Heart left ventricle (tissue), 16 donors: ENCODE measurements at regions of chr17 and their contacts with region 1.

Region 1: DNA sequence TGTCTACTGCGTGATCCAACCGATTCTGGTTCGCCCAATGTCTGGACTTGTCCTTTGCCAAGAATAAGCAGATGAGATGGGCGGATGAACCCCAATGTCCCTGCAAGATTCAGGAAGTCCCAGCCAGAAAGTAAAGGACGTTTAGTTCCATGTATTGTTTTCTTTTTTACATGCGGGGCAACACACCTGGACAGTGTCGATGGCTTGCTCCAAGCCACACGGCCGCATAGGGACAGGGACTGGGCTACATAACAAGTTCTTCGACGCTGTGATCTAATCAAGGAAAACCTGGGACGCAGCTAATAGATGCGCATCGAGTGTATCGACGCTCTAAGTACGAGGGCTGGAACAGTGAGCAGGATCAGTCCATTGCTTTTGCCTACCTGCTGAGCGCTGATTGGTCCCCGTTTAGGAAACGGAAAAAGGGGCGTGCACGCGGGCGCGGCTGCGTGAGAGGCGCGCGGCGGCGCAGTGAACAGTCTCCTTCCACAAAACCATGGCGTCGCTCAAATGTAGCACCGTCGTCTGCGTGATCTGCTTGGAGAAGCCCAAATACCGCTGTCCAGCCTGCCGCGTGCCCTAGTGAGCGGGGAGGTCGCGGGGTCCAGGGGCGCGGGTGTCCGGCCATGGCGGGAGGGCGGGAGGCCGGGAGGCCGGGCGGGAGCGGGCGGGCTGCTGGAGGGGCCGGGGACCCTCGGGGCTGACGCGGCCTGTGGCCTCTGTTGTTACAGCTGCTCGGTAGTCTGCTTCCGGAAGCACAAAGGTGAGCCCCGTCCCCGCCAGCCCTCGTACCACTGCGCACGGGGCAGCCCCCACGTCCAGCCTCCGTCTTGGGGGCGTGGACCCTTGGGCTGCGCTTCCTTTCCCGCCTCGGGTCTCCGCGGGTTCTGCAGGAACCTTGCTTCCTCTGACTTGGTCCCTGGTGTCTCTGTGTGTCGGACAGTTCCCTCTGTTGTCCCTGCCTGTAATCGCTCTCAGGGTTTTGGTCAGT is at the start of gene ZNHIT3:
- DNase-seq: peak; percentile 92 to 95 (median 93)
- ATAC-seq: peak; percentile 91 to 98 (median 97)
- H3K4me3 ChIP-seq: peak within 1 kb of the TSS; percentile 74 to 99 (median 96)
- H3K27ac ChIP-seq: peak within 1 kb of the TSS; percentile 63 to 88 (median 80)
- H3K4me1 ChIP-seq: peaks cover 2 to 40% (median 29%) of the 10 kb centered on the region in 12 donors
- H3K27me3 ChIP-seq: peaks cover 0 to 14% (median 0%) of the 10 kb centered on the region in 9 donors
- CTCF ChIP-seq: no peak
- POLR2A ChIP-seq: peak in 1 of 2 donors; percentile 64
- total RNA-seq, gene ZNHIT3: 14.8 to 28.5 (median 23.1) TPM

Region 2: GRCh38 chr17:35969558-35970380 is 516.7 kb before region 1 on chr17:
- intact Hi-C with region 1: loop called in 9 of 10 experiments (anchors 1 to 10 kb)
- DNase-seq: peak in 4 of 5 donors; percentile 63 to 78 (median 69)
- ATAC-seq: peak; percentile 67 to 81 (median 75)
- H3K4me3 ChIP-seq: no peak overlapping the region
- H3K27ac ChIP-seq: no peak overlapping the region
- H3K4me1 ChIP-seq: peaks cover 0 to 22% (median 11%) of the 10 kb centered on the region in 12 donors
- H3K27me3 ChIP-seq: no peaks in the 10 kb centered on the region
- CTCF ChIP-seq: peak; percentile 72 to 94 (median 84)
- POLR2A ChIP-seq: no peak

Region 3: DNA sequence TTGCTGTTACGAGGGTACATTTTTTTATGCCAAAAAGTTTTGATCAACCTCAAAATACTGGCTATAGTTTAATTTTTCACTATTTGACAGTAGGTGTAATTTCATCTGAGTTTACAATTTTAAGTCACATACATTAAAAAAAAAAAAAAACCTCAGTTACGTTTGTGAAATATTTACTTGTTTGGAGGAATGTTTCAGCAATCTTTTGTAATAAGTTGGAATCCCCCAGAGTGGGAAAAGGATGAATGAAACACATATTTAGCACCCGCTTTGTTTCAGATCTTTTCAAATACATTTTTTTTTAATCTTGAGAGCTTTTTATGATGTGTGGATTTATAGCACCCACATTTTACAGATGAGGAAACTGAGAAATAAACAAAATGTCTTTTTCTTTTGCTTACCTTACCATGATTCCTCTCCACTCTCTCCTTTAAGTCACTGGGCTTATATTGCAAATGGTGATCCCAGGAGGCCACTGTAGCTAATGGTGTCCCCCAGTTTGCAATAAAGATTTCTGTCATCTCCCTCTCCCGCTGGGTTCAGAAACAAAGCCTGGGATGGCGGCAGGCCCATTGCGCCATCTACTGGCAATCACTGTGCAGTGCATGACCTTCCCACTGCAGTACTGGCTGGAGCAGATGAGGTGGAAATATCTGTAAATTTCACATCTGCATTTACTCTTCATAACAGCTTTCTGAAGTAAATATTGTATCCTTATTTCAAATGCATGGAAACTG is 337.8 kb before region 1 on chr17:
- intact Hi-C with region 1: loop called in 2 of 10 experiments (anchors 5 to 10 kb)
- DNase-seq: peak; percentile 47 to 84 (median 71)
- ATAC-seq: peak; percentile 56 to 94 (median 90)
- H3K4me3 ChIP-seq: no peak overlapping the region
- H3K27ac ChIP-seq: peak overlapping the region in 1 of 12 donors; percentile 7
- H3K4me1 ChIP-seq: peaks cover 0 to 9% (median 0%) of the 10 kb centered on the region in 12 donors
- H3K27me3 ChIP-seq: peaks cover 0 to 16% (median 0%) of the 10 kb centered on the region in 9 donors
- CTCF ChIP-seq: peak; percentile 91 to 100 (median 98)
- POLR2A ChIP-seq: no peak

Region 4: GRCh38 chr17:36534840-36535668 is 48.6 kb after region 1 on chr17 and contains the starts of genes MYO19 and PIGW:
- intact Hi-C with region 1: loop called in 6 of 10 experiments (anchors 5 to 10 kb)
- DNase-seq: peak; percentile 87 to 94 (median 92)
- ATAC-seq: peak; percentile 85 to 95 (median 92)
- H3K4me3 ChIP-seq: peak within 1 kb of the TSS; percentile 38 to 94 (median 82)
- H3K27ac ChIP-seq: peak within 1 kb of the TSS; percentile 84 to 99 (median 96)
- H3K4me1 ChIP-seq: peaks cover 0 to 22% (median 14%) of the 10 kb centered on the region in 12 donors
- H3K27me3 ChIP-seq: no peaks in the 10 kb centered on the region
- CTCF ChIP-seq: peak in 3 of 12 donors; percentile 13 to 29 (median 26)
- POLR2A ChIP-seq: peak in 1 of 2 donors; percentile 83
- total RNA-seq, gene MYO19: 5.8 to 32.7 (median 11.6) TPM
- total RNA-seq, gene PIGW: 2.1 to 7.9 (median 5.7) TPM

Region 5: GRCh38 chr17:36591434-36592315 is 105.2 kb after region 1 on chr17 and contains the start of gene DHRS11:
- intact Hi-C with region 1: loop called in 1 of 10 experiments (anchors 10 kb)
- DNase-seq: peak; percentile 87 to 92 (median 89)
- ATAC-seq: peak; percentile 88 to 97 (median 96)
- H3K4me3 ChIP-seq: peak within 1 kb of the TSS; percentile 73 to 100 (median 90)
- H3K27ac ChIP-seq: peak within 1 kb of the TSS in 11 of 12 donors; percentile 24 to 86 (median 75)
- H3K4me1 ChIP-seq: peaks cover 0 to 33% (median 15%) of the 10 kb centered on the region in 12 donors
- H3K27me3 ChIP-seq: no peaks in the 10 kb centered on the region
- CTCF ChIP-seq: peak in 1 of 12 donors; percentile 21
- POLR2A ChIP-seq: peak in 1 of 2 donors; percentile 46
- total RNA-seq, gene DHRS11: 11.0 to 22.2 (median 13.5) TPM